Activated naive CD4-positive, alpha-beta T cell treated with anti-CD3 and anti-CD28 coated beads for 36 hours (primary cell): ENCODE measurements at regions of chr11 and their contacts with region 1.

Region 1: GRCh38 chr11:33987975-33988580 is 63.5 kb upstream of the CAPRIN1 start:
- DNase-seq: peak; percentile 87
- H3K4me3 Mint-ChIP-seq: no peak overlapping the region
- H3K27ac Mint-ChIP-seq: no peak overlapping the region
- H3K4me1 Mint-ChIP-seq: peaks cover 5% of the 10 kb centered on the region
- H3K27me3 Mint-ChIP-seq: peaks cover 4% of the 10 kb centered on the region

Region 2: DNA sequence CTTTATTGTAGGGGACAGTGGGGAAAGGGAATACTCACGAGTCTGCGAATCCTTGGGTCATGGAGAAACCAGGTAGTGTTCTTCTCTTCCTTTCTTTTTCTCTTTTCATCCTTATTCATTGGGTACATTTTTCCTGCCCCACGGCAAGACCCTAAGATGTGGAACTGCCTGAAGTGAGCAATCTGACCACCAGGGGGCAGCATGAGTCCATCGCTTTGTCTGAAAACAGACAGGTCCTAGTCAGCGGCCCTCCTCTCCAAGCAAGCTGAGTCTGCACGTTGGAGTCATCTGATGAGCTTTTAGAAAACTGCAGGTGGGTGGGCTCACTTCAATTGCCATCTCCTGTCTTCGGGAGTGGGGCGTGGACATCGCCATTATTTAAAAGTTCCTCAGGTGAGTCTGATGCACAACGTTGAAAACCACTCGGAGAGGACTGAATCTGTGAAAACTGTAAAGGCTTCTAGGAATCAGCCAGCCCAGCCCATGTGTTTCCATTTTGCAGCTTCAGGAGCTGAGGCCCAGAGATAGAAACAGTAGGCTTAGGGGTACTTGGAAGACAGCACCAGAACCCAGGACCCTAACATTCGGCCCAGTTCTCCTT is 179.8 kb before region 1 on chr11:
- CTCF ChIA-PET with region 1: interaction called, 7 read pairs
- intact Hi-C with region 1: loop called (anchors 1 kb)
- DNase-seq: peak; percentile 92
- H3K4me3 Mint-ChIP-seq: no peak overlapping the region
- H3K27ac Mint-ChIP-seq: no peak overlapping the region
- H3K4me1 Mint-ChIP-seq: peaks cover 2% of the 10 kb centered on the region
- H3K27me3 Mint-ChIP-seq: peaks cover 7% of the 10 kb centered on the region

Region 3: DNA sequence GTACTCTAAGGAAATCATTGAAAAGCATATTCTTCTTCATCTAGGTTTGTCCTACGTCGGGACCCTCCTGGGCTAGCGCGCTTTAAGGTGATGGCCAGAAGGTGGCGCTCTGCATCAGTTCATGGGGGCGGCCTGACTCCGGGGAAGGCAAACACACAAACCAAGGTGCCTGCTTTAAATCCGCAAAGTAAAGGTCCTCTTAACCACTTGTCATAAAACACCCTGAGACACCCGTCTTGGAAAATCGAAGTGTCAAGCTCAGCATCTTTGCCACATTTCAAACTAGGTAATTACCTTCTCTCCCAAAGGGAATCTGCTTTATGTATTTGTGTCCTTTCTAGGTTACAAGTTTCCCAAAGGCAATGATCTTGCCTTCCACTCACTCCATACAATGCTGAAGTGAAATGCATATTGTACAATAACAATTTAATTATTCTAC is 130.1 kb before region 1 on chr11:
- CTCF ChIA-PET with region 1: interaction called, 35 read pairs
- intact Hi-C with region 1: loop called (anchors 1 kb)
- DNase-seq: peak; percentile 88
- H3K4me3 Mint-ChIP-seq: no peak overlapping the region
- H3K27ac Mint-ChIP-seq: no peak overlapping the region
- H3K4me1 Mint-ChIP-seq: no peaks in the 10 kb centered on the region
- H3K27me3 Mint-ChIP-seq: peaks cover 29% of the 10 kb centered on the region

Region 4: DNA sequence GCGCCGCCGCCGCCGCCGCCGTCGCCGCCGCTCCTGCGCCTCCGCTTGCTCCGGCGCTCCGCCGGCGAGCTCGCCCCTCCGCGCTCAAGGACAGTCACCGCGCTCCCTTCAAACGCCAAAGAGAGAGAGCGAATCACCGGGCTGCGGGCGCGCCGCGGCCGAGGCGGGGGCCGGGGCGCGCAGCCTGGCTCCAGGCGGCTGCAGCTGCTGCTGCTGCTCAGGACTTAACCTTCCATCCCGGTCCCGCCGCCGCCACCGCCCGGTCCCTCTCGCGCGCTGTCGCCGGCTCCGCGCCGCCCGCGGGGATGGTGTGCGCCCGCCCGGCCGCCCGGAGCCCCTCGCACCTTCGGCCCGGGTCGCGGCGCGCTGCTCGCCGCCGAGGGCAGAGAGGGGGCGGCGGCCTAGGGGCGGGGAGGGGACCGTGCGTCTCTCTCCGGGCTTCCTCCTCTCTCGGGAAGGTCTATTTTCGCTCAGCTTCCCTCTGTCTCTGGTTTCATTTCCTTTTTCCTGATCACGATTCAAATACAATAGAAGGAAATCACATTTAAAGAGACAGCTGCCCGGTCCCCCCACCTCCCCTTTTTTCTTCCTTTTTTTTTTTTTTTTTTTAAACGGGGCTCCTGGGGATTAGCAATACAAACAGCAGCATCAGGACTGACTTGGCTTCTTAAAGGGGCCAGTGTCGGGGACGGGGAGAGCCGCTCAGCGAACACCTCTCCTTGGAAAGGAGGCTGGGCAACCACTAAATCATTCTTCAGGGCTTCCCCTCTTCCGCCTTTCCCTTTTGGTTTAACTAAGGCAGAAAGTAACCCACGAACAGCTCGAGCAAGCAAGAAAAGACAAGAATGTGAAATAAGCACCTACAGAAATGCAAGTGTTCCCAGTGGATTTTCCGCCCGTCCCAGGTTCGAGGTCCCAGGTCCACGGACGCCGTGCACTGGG is 118.3 kb before region 1 on chr11:
- CTCF ChIA-PET with region 1: interaction called, 15 read pairs
- intact Hi-C with region 1: no loop called
- DNase-seq: peak; percentile 20
- H3K4me3 Mint-ChIP-seq: peak overlapping the region; percentile 76
- H3K27ac Mint-ChIP-seq: no peak overlapping the region
- H3K4me1 Mint-ChIP-seq: peaks cover 13% of the 10 kb centered on the region
- H3K27me3 Mint-ChIP-seq: peaks cover 58% of the 10 kb centered on the region

Region 5: GRCh38 chr11:33970984-33971466 is 17.1 kb before region 1 on chr11:
- CTCF ChIA-PET with region 1: interaction called, 14 read pairs
- intact Hi-C with region 1: no loop called
- DNase-seq: peak; percentile 48
- H3K4me3 Mint-ChIP-seq: no peak overlapping the region
- H3K27ac Mint-ChIP-seq: no peak overlapping the region
- H3K4me1 Mint-ChIP-seq: peaks cover 2% of the 10 kb centered on the region
- H3K27me3 Mint-ChIP-seq: peaks cover 7% of the 10 kb centered on the region

Region 6: DNA sequence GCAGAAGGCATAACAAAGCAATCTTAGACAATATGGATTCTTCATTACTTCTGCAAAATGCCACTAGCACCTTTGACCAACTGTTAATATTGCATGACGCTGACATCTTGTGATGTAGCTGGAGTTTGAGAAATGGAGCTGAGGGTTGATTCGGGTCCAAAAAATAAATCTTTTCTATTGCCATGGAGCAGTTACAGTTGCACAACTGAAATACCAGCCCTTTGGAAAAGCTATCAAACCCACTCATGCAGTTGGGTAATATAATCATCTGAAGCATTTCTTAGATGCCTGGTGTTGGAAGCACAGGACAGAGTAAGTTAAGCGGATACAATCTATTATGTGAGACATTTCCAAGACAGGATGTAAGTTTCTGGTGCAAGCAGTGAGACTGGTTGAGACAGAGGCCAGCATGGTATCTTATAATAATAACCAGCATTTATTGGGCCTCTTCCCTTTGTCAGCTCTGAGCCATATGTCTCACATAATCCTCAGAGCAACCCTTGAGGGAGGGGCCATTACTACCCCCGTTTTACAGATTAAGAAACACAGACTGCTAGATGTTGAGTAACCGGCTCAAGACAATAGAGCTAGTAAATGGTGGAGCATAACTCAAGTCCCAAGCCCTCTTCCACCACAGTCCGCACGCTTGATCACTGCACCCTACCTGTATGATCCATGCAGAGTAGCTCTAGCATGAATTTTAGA is 11.4 kb before region 1 on chr11:
- CTCF ChIA-PET with region 1: interaction called, 14 read pairs
- intact Hi-C with region 1: no loop called
- DNase-seq: no peak
- H3K4me3 Mint-ChIP-seq: no peak overlapping the region
- H3K27ac Mint-ChIP-seq: no peak overlapping the region
- H3K4me1 Mint-ChIP-seq: no peaks in the 10 kb centered on the region
- H3K27me3 Mint-ChIP-seq: peaks cover 4% of the 10 kb centered on the region

Region 7: DNA sequence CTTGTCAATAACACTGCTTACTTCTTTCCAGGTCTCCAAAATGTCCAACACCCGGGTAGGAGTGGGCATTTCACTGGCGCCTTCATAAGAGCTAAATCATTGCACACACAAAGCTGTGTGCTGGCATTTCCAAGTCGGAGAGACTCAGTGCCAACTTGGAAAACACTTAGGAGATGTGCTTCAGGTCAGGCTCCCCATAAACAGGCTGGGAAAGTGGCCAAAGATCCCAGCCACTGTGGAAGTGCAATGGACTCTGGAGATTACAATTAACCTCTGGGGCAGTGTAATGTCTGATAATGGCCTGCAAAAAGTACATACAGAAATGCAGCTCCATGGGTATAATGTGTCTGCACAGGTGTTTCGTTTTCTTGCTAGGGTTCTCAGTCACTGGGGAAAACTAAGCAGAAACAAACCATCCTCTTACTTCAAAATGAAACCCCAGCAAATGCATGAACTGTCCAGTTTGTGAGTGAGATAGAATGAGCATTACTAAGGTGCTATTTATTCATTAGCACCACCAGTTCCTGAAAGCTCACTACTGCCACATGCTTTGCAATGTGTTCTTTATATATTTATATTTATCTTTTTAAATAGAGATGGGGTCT is 290.7 kb after region 1 on chr11:
- CTCF ChIA-PET with region 1: no interaction called
- intact Hi-C with region 1: no loop called
- DNase-seq: no peak
- H3K4me3 Mint-ChIP-seq: no peak overlapping the region
- H3K27ac Mint-ChIP-seq: no peak overlapping the region
- H3K4me1 Mint-ChIP-seq: peaks cover 3% of the 10 kb centered on the region
- H3K27me3 Mint-ChIP-seq: no peaks in the 10 kb centered on the region